ENCODE measurements at regions of chr2 and their contacts with region 1.

Region 1: GRCh38 chr2:157497638-157498314 is 53.9 kb upstream of the CYTIP start:
- DNase-seq: no peak
- H3K4me3 Mint-ChIP-seq: no peak overlapping the region
- H3K27ac Mint-ChIP-seq: no peak overlapping the region
- H3K4me1 Mint-ChIP-seq: peaks cover 41% of the 10 kb centered on the region
- H3K27me3 Mint-ChIP-seq: no peaks in the 10 kb centered on the region

Region 2: GRCh38 chr2:157327621-157328500 is 169.9 kb before region 1 on chr2:
- intact Hi-C with region 1: loop called (anchors 1 kb)
- DNase-seq: peak; percentile 74
- H3K4me3 Mint-ChIP-seq: peak overlapping the region; percentile 32
- H3K27ac Mint-ChIP-seq: peak overlapping the region; percentile 26
- H3K4me1 Mint-ChIP-seq: peaks cover 38% of the 10 kb centered on the region
- H3K27me3 Mint-ChIP-seq: no peaks in the 10 kb centered on the region

Region 3: DNA sequence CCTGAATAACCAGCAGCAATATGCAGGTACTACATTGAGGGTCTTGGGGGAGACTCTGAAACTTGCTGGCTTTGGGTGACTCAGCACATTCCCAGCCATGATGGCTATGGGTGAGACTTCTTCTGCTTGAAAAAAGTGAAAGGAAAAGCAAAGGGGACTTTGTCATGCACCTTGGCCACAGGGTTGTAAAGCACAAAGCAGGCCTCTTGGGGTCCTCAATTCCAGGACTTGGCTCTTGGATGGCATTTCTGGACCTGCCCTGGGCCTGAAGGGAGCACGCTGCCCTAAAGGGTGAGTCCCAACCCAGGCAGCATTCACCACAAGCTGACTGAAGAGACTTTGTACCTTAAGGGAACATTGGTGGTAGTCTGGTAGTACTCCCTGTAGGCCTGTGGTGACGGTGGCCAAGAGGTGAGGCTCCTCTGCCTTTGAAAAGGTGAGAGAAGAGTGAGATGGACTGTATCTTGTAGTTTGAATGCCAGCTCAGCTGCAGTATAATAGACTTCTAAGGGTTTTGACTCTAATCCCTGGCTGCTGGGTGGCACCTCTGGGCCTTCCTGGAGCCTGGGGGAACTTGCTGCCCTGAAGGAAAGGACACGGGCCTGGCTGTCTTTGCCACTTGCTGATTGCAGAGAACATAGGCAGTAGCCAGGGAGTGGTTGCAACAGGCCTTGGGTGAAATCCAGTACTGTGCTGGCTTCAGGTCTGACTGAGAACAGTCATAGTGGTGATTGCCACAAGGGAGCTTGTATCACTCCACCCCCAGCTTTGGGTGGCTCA is 17.4 kb before region 1 on chr2:
- intact Hi-C with region 1: no loop called
- DNase-seq: peak; percentile 62
- H3K4me3 Mint-ChIP-seq: peak overlapping the region; percentile 83
- H3K27ac Mint-ChIP-seq: peak overlapping the region; percentile 99
- H3K4me1 Mint-ChIP-seq: peaks cover 95% of the 10 kb centered on the region
- H3K27me3 Mint-ChIP-seq: no peaks in the 10 kb centered on the region

Region 4: DNA sequence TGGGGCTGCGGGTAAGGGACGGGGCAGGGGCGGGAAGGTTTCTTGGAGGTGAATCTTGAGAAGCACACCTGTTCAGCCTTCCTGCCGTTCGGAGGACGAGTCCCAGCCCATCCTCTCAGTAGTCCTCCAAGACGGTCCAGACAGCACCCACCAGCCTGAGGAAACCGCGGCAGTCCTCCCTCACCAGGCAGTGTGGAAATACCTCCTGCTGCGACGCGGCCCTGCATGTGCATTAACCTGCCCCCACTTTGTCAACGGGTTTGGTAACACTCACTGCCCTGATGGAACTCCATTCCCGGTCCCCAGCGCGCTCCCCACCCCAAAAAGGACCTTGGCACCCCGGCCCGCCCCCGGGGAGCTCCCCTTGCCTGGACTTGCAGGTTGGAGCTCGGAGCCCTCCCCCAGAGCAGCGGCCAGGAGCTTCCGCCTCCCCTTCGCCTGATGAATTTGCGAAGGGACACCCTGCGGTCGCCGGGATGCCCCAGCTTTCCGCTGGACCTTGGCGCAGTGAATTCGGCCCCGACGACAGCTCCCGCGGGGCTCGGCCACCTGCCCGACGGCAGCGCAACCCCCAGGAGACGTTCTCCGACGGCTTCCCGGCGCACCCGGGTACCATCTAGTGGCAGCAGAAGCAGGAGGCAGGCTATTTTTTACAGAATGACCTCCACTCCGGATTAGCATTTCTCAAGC is 99.4 kb after region 1 on chr2:
- intact Hi-C with region 1: loop called (anchors 1 kb)
- DNase-seq: peak; percentile 47
- H3K4me3 Mint-ChIP-seq: peak overlapping the region; percentile 63
- H3K27ac Mint-ChIP-seq: no peak overlapping the region
- H3K4me1 Mint-ChIP-seq: peaks cover 7% of the 10 kb centered on the region
- H3K27me3 Mint-ChIP-seq: peaks cover 39% of the 10 kb centered on the region

Region 5: GRCh38 chr2:157777427-157777826 is 279.7 kb after region 1 on chr2:
- intact Hi-C with region 1: loop called (anchors 1 kb)
- DNase-seq: peak; percentile 19
- H3K4me3 Mint-ChIP-seq: no peak overlapping the region
- H3K27ac Mint-ChIP-seq: no peak overlapping the region
- H3K4me1 Mint-ChIP-seq: peaks cover 30% of the 10 kb centered on the region
- H3K27me3 Mint-ChIP-seq: no peaks in the 10 kb centered on the region

Region 6: DNA sequence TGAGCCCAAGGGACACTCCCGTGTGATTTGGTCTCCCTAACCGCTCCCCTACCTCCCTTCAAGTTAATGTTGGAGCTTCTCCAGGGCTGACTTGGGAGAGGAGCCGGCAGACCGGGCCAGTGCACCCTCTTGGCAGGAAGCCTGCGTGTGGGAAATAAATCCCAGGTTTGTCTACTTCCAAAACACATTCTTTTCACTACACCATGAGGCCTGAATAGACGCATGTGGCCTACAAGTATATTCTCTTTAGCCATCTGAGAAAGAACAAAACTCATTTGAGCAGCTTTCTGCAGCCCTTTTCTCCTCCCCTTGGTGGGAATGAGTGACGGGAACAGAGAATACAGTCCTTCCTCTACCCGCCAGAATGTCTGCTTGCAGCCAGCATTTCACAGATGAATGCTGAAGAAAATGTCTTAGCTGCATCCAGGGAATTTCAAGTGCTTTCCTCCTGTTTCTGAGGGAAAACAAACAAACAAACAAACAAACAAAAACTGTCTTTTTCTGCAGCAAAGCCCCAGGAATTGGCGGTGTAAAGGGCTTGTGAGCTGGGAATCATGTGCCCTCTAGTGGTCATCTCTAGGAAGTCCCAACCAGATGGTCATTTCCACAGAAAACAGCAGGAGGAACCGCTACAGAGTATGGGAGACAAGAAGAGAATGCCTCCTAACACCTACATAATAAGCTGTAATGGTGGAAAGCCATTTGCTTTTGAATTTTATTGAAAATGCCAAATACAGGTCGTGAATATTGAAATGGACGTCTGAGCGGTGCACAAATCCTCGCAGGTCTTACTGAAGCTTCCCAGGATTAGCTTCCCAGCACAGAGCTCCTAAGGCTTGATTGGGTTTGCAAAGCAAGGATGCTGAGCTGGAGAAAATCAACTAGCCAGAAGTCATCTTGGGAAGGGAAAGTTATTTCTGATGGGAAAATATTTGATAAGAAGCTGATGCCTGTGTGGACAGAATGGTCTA is 1256.2 kb after region 1 on chr2:
- intact Hi-C with region 1: loop called (anchors 5 kb)
- DNase-seq: peak; percentile 15
- H3K4me3 Mint-ChIP-seq: no peak overlapping the region
- H3K27ac Mint-ChIP-seq: no peak overlapping the region
- H3K4me1 Mint-ChIP-seq: no peaks in the 10 kb centered on the region
- H3K27me3 Mint-ChIP-seq: peaks cover 3% of the 10 kb centered on the region